AG04449 (cell line): ENCODE measurements at regions of chr2 and their contacts with region 1.

Region 1: DNA sequence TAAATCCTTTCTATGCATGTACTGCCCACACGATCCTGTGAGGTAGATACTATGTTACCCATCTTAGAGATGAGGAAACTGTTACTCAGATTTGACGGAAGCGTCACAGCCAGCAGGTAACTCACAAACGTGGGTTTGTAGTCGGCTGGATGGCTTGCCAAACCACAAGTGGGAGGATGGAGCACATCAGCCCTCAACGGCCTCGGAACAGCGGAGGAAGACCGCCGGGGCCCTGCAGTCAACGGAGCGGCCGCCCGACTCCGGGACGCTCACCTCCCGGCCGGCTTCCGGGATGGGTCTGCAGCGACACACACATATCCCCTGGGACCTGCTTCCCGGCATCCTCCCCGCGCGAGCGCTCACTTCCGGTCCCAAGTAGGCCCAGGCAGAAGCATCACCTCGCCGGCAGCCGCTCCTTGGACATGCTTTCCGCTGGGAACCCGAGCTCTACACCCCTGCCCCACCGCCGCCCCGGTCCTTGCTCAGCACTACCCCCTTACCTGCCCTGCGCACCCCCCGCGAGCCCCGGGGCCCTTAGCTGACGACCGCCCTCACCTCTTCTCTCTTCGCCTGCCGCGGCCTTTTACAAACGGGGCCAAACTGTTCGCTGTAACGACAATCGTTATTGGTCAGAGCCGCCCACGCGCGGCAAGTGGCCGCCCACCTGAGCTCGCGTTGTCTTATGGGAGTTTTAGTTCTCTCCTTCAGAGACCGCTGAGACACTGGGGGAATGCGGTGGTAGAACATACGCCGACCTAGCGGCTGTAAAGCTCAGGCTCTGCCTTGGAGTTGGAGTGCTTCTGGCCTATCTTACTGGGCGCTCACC is at the start of gene C2orf42:
- DNase-seq: peak; percentile 89
- H3K4me3 ChIP-seq: peak within 1 kb of the TSS; percentile 69
- CTCF ChIP-seq: peak; percentile 22

Region 2: DNA sequence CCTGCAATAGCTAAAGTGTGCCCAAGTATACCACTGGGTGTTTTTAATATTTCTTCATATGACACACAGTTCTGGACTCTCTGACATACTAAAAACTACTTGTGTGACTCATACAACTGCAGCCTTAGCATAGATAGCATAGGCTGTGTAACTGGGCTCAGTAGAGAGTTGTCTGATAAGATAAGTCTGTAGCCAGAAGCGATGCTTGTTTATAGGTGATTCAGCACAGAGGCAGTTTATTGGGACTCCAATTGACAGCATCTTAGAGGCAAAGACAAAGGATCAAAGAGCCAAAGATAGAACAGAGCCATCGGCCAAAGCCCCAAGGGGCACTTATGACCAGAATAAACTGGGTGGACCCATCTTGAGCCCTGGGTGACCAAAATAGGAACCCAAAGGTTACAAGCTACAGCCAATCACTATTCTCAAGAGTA is 589.4 kb before region 1 on chr2:
- CTCF ChIA-PET with region 1: no interaction called
- POLR2A ChIA-PET with region 1: no interaction called
- DNase-seq: peak; percentile 69
- H3K4me3 ChIP-seq: no peak overlapping the region
- CTCF ChIP-seq: no peak

Region 3: GRCh38 chr2:69946351-69947077 is 244.1 kb before region 1 on chr2:
- CTCF ChIA-PET with region 1: no interaction called
- POLR2A ChIA-PET with region 1: no interaction called
- DNase-seq: no peak
- H3K4me3 ChIP-seq: no peak overlapping the region
- CTCF ChIP-seq: no peak

Region 4: GRCh38 chr2:70014959-70015358 is 175.7 kb before region 1 on chr2:
- CTCF ChIA-PET with region 1: no interaction called
- POLR2A ChIA-PET with region 1: no interaction called
- DNase-seq: no peak
- H3K4me3 ChIP-seq: no peak overlapping the region
- CTCF ChIP-seq: no peak

Region 5: GRCh38 chr2:70214953-70215549 is 24.4 kb after region 1 on chr2:
- CTCF ChIA-PET with region 1: no interaction called
- POLR2A ChIA-PET with region 1: interaction called, 13 read pairs
- DNase-seq: peak; percentile 82
- H3K4me3 ChIP-seq: no peak overlapping the region
- CTCF ChIP-seq: no peak

Region 6: DNA sequence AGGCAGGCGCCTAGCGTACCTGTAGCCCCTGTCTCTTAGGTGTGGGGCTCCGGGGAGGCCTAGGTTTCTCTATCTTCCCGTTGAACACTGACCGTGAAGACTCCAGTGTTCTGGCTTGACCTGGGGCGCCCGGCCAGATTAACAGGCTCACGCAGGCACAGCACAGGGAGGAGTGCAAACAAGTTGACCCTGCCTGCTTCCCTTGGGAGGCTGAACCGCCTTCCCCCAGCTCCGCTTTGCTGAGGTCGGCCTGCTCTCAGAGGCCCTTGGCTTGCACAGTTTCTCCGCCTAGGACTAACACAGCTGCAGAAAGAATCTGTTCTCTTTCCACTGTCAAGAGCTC is 67.9 kb after region 1 on chr2:
- CTCF ChIA-PET with region 1: no interaction called
- POLR2A ChIA-PET with region 1: interaction called, 10 read pairs
- DNase-seq: no peak
- H3K4me3 ChIP-seq: peak overlapping the region; percentile 82
- CTCF ChIP-seq: no peak